ENCODE measurements at regions of chr6 and their contacts with region 1.

Region 1: GRCh38 chr6:13554929-13555333 is 19.5 kb upstream of the SIRT5 start:
- DNase-seq: peak in 9 of 10 donors; percentile 27 to 82 (median 62)
- H3K4me3 ChIP-seq: peak overlapping the region in 29 of 59 donors; percentile 0 to 42 (median 18)
- H3K27ac ChIP-seq: peak overlapping the region; percentile 58 to 95 (median 84)
- H3K27me3 ChIP-seq: no peaks in the 10 kb centered on the region
- CTCF ChIP-seq: peak in 9 of 56 donors; percentile 4 to 25 (median 15)

Region 2: GRCh38 chr6:13413900-13414555 is 140.9 kb before region 1 on chr6:
- intact Hi-C with region 1: loop called in 1 of 2 experiments (anchors 5 kb)
- DNase-seq: peak; percentile 47 to 90 (median 80)
- H3K4me3 ChIP-seq: peak overlapping the region in 3 of 59 donors; percentile 7 to 9 (median 8)
- H3K27ac ChIP-seq: peak overlapping the region; percentile 26 to 95 (median 78)
- H3K27me3 ChIP-seq: no peaks in the 10 kb centered on the region
- CTCF ChIP-seq: peak in 43 of 56 donors; percentile 2 to 62 (median 35)

Region 3: GRCh38 chr6:13526727-13527670 is 27.9 kb before region 1 on chr6:
- intact Hi-C with region 1: loop called in 1 of 2 experiments (anchors 1 kb)
- DNase-seq: peak in 3 of 10 donors; percentile 14 to 69 (median 28)
- H3K4me3 ChIP-seq: no peak overlapping the region
- H3K27ac ChIP-seq: peak overlapping the region in 24 of 59 donors; percentile 14 to 83 (median 42)
- H3K27me3 ChIP-seq: no peaks in the 10 kb centered on the region
- CTCF ChIP-seq: no peak

Region 4: DNA sequence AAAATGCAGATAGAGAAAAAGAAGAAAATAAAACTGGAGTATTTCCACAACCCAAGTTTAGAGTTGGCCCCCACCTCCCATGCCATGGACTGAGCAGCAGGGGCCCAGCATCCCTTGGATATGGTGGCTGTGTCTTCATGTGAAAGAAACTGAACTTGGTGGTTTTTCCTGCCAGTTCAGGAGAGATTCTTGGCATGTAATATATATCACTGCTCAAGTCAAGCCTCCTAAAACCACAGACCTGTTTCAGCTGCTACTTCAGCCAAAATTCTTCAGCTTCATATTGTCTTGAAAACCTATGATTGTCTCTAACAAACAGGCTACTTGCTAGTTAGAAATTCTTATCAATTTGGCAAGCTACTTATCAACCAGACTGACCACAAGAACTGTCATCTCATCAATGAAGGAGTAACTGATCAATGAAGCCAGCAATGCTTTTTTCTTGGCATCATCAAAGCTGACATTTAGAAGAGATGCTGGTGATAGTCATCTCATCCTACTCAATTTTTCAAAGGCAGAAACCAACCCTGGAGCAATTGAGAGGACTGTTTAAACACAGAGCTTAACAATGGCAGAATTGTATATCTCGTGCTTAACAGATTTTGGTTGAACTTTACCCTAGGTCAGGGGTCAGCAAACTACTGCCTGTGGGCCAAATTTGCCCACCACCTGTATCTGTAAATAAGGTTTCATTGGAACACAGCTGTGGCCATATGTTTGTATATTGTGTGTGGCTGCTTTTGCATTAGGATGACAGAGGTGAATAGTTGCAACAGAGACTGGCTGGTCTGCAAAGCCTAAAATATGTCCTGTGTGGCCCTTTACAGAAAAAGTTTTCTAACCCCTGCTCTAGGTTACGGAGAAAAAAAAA is 49.9 kb after region 1 on chr6:
- intact Hi-C with region 1: no loop called
- DNase-seq: no peak
- H3K4me3 ChIP-seq: no peak overlapping the region
- H3K27ac ChIP-seq: peak overlapping the region in 1 of 59 donors; percentile 7
- H3K27me3 ChIP-seq: no peaks in the 10 kb centered on the region
- CTCF ChIP-seq: no peak

Region 5: DNA sequence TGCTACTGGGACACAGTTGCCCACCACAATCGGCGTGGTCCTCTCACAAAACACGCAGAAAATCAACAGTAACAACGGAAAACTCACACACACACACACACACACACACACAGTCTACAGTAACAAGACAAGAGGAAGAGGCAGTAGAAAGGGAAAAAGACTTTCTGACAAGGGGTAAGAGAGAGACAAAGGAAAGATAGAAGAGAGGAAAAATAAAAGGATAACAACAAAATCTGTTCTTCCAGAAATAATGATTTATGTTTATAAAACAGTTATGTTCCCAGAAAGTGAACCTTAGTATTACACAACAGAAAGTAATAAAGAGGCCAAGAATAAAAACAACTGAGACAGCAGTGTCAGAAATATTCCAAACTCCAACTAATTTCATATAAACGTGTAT is 153.8 kb after region 1 on chr6:
- intact Hi-C with region 1: no loop called
- DNase-seq: no peak
- H3K4me3 ChIP-seq: peak overlapping the region; percentile 16 to 95 (median 83)
- H3K27ac ChIP-seq: peak overlapping the region in 42 of 59 donors; percentile 26 to 99 (median 92)
- H3K27me3 ChIP-seq: no peaks in the 10 kb centered on the region
- CTCF ChIP-seq: no peak

Region 6: DNA sequence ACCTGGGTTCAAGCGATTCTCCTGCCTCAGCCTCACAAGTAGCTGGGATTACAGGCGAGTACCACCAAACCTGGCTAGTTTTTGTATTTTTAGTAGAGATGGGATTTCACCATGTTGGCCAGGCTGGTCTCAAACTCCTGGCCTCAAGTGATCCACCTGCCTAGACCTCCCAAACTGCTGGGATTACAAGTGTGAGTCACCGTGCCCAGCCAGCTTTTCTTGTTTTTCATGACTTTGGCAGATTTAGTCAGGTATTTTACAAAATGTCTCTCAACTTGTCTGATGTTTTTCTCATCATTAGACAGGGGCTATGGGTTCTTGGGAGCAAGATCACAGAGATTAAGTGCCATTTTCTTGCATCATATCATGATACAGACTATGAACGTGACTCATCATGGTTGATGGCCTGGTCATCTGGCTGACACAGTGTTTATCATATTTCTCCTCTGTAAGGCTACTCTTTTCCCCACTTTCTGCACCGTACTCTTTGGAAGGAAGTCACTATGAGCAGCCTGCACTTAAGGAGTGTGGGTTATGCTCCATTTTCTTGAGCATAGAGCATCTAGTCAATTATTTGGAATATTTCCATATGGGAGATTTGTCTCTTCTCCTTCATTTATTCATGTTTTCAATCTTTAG is 437.6 kb after region 1 on chr6:
- intact Hi-C with region 1: no loop called
- DNase-seq: no peak
- H3K4me3 ChIP-seq: no peak overlapping the region
- H3K27ac ChIP-seq: no peak overlapping the region
- H3K27me3 ChIP-seq: peaks cover 0 to 8% (median 0%) of the 10 kb centered on the region in 45 donors
- CTCF ChIP-seq: no peak